GM12878 (cell line): ENCODE measurements at regions of chr3 and their contacts with region 1.

Region 1: GRCh38 chr3:113912552-113913236 is 35.1 kb upstream of the ZDHHC23 start:
- DNase-seq: peak; percentile 35
- ATAC-seq: peak; percentile 98
- H3K4me3 ChIP-seq: no peak overlapping the region
- H3K27ac ChIP-seq: no peak overlapping the region
- H3K4me1 ChIP-seq: no peaks in the 10 kb centered on the region
- H3K27me3 ChIP-seq: no peaks in the 10 kb centered on the region
- CTCF ChIP-seq: peak; percentile 76 to 89 (median 79)
- EP300 ChIP-seq: no peak
- POLR2A ChIP-seq: no peak
- RAD21 ChIP-seq: peak; percentile 95

Region 2: DNA sequence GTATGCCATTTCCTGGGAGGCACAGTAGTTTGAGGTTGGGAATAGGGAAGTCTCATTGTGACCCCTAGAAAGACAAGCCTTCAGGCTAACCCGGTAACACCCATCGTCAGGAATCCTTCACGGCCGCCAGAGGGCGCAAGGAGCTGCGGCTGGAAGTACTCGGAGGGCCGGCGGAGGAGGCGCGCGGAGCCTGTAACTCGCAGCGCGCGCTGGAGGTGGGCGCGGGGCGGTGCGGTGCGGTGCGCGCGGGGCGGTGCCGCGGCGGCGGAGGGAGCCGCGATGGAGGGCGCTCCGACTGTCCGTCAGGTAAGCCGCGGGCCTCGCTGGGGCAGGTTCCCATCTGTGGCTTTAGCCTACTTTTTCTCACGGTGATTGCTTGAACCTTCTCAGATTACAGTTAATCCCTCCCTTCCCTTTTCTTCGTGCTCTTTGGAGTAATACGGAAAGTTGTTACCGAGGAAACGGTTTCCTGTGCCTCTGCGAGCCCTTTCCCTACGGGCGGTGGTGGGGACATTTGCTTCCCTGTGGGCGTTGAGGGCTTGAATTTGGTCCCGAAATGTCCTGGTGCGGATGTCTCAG is 74.0 kb before region 1 on chr3 and contains the start of gene GRAMD1C:
- CTCF ChIA-PET with region 1: interaction called, 84 read pairs
- POLR2A ChIA-PET with region 1: no interaction called
- RAD21 ChIA-PET with region 1: interaction called, 45 read pairs
- SMC1A ChIA-PET with region 1: interaction called, 108 read pairs
- in situ Hi-C with region 1: loop called (anchors 5 kb)
- intact Hi-C with region 1: loop called (anchors 1 kb)
- DNase-seq: peak; percentile 59
- ATAC-seq: peak; percentile 98
- H3K4me3 ChIP-seq: peak within 1 kb of the TSS; percentile 54
- H3K27ac ChIP-seq: no peak within 1 kb of the TSS
- H3K4me1 ChIP-seq: peaks cover 3% of the 10 kb centered on the region; the same call in 1 of the 2 replicates
- H3K27me3 ChIP-seq: no peaks in the 10 kb centered on the region
- CTCF ChIP-seq: peak; percentile 86 to 89 (median 88)
- EP300 ChIP-seq: no peak
- POLR2A ChIP-seq: peak; percentile 40; the same call in 1 of the 2 replicates
- RAD21 ChIP-seq: peak; percentile 75
- polyA plus RNA-seq, gene GRAMD1C: 3.2 to 8.4 TPM

Region 3: GRCh38 chr3:113897373-113897777 is 15.3 kb before region 1 on chr3:
- CTCF ChIA-PET with region 1: interaction called, 12 read pairs
- POLR2A ChIA-PET with region 1: no interaction called
- RAD21 ChIA-PET with region 1: interaction called, 3 read pairs
- SMC1A ChIA-PET with region 1: interaction called, 6 read pairs
- in situ Hi-C with region 1: no loop called
- intact Hi-C with region 1: no loop called
- DNase-seq: no peak
- ATAC-seq: peak; percentile 41
- H3K4me3 ChIP-seq: no peak overlapping the region
- H3K27ac ChIP-seq: no peak overlapping the region
- H3K4me1 ChIP-seq: no peaks in the 10 kb centered on the region
- H3K27me3 ChIP-seq: no peaks in the 10 kb centered on the region
- CTCF ChIP-seq: no peak
- EP300 ChIP-seq: no peak
- POLR2A ChIP-seq: no peak
- RAD21 ChIP-seq: no peak